ENCODE measurements at regions of chr5 and their contacts with region 1.

Region 1: DNA sequence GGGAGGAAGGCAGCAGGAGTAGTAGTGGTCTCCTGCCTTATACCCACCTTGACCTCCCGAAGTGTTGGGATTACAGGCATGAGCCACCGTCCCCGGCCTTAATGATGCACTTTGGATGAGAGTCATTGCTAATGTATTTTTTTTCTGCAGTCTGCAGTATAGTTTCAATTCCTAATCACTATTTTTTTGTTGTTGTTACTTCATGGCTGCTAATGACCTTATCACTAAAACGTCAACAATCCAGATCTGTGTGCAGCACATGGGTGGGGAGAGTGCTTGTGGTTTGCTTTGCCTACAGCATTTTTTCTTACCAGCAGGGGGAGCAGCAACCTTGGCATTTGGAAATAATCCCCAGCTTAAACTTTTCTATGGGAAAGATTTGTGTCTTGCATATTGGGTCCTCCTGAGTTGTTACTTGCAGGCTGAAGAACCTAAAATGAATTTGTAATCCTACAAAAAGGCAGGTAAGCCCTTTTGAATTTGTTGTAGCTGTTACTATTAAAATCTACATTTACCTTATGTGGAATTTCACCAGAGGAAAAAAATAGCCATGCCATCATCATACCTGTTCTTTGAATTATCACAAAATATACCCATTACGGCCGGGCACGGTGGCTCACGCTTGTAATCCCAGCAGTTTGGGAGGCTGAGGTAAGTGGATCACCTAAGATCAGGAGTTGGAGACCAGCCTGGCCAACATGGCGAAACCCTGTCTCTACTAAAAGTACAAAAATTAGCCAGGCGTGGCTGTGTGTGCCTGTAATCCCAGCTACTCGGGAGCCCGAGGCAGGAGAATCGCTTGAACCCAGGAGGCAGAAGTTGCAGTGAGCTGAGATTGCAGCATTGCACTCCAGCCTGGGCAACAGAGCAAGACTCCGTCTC is 6.3 kb upstream of the MED7 start:
- DNase-seq: peak; percentile 88
- ATAC-seq: peak; percentile 66
- H3K4me3 Mint-ChIP-seq: peak overlapping the region; percentile 2
- H3K27ac Mint-ChIP-seq: peak overlapping the region; percentile 74
- H3K4me1 Mint-ChIP-seq: peaks cover 48% of the 10 kb centered on the region
- H3K27me3 Mint-ChIP-seq: no peaks in the 10 kb centered on the region

Region 2: DNA sequence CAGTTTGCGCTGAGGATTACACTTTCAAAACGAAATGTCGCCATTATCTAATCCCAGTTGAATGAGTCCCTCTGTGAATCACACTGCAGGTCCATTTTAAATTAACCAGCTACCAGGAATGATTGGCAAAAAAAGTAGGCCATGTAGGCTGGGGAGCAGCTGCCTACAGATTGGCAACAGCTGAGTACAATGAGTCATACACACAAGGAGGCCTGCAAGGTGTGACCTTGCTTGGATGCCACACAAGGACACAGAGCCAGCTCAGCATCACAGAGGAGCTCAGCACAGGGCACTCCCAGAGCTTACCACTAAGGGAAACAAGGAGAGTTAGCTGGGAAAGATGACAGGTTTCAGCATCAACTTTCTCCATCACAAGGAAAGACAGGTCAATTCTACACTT is 102.9 kb before region 1 on chr5:
- CTCF ChIA-PET with region 1: no interaction called
- POLR2A ChIA-PET with region 1: no interaction called
- intact Hi-C with region 1: no loop called
- DNase-seq: peak; percentile 41
- ATAC-seq: peak; percentile 94
- H3K4me3 Mint-ChIP-seq: no peak overlapping the region
- H3K27ac Mint-ChIP-seq: no peak overlapping the region
- H3K4me1 Mint-ChIP-seq: peaks cover 39% of the 10 kb centered on the region
- H3K27me3 Mint-ChIP-seq: no peaks in the 10 kb centered on the region

Region 3: GRCh38 chr5:157172403-157172802 is 23.4 kb after region 1 on chr5:
- CTCF ChIA-PET with region 1: interaction called, 40 read pairs
- POLR2A ChIA-PET with region 1: interaction called, 6 read pairs
- intact Hi-C with region 1: no loop called
- DNase-seq: peak; percentile 96
- ATAC-seq: peak; percentile 93
- H3K4me3 Mint-ChIP-seq: peak overlapping the region; percentile 63
- H3K27ac Mint-ChIP-seq: peak overlapping the region; percentile 94
- H3K4me1 Mint-ChIP-seq: peaks cover 85% of the 10 kb centered on the region
- H3K27me3 Mint-ChIP-seq: no peaks in the 10 kb centered on the region

Region 4: GRCh38 chr5:157189223-157189622 is 40.2 kb after region 1 on chr5:
- CTCF ChIA-PET with region 1: interaction called, 28 read pairs
- POLR2A ChIA-PET with region 1: interaction called, 4 read pairs
- intact Hi-C with region 1: loop called in 1 of 2 experiments (anchors 2 kb)
- DNase-seq: peak; percentile 71
- ATAC-seq: peak; percentile 59
- H3K4me3 Mint-ChIP-seq: peak overlapping the region; percentile 93
- H3K27ac Mint-ChIP-seq: peak overlapping the region; percentile 96
- H3K4me1 Mint-ChIP-seq: peaks cover 75% of the 10 kb centered on the region
- H3K27me3 Mint-ChIP-seq: no peaks in the 10 kb centered on the region

Region 5: GRCh38 chr5:157204765-157205164 is 55.8 kb after region 1 on chr5:
- CTCF ChIA-PET with region 1: interaction called, 20 read pairs
- POLR2A ChIA-PET with region 1: interaction called, 3 read pairs
- intact Hi-C with region 1: no loop called
- DNase-seq: no peak
- ATAC-seq: no peak
- H3K4me3 Mint-ChIP-seq: peak overlapping the region; percentile 62
- H3K27ac Mint-ChIP-seq: peak overlapping the region; percentile 96
- H3K4me1 Mint-ChIP-seq: peaks cover 90% of the 10 kb centered on the region
- H3K27me3 Mint-ChIP-seq: no peaks in the 10 kb centered on the region

Region 6: DNA sequence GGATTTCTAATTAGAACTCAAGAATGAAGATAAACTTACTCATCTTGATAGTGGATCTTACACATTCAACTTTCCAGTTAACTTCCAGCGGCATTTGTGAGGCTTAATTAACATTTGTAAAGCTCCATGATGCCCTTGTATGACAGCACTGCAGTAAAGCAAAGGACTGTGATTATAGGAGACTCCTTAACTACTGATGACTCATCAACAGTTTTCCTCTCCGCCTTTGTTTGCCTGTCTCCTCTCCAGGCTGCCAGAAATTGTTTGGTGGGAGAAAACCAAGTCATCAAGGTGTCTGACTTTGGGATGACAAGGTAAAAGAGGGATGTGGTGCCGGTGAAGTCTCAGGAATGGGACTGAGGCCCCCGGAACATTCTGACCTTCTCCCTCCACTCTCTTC is 96.5 kb after region 1 on chr5:
- CTCF ChIA-PET with region 1: interaction called, 13 read pairs
- POLR2A ChIA-PET with region 1: no interaction called
- intact Hi-C with region 1: no loop called
- DNase-seq: no peak
- ATAC-seq: no peak
- H3K4me3 Mint-ChIP-seq: peak overlapping the region; percentile 12
- H3K27ac Mint-ChIP-seq: peak overlapping the region; percentile 88
- H3K4me1 Mint-ChIP-seq: peaks cover 89% of the 10 kb centered on the region
- H3K27me3 Mint-ChIP-seq: no peaks in the 10 kb centered on the region

Region 7: DNA sequence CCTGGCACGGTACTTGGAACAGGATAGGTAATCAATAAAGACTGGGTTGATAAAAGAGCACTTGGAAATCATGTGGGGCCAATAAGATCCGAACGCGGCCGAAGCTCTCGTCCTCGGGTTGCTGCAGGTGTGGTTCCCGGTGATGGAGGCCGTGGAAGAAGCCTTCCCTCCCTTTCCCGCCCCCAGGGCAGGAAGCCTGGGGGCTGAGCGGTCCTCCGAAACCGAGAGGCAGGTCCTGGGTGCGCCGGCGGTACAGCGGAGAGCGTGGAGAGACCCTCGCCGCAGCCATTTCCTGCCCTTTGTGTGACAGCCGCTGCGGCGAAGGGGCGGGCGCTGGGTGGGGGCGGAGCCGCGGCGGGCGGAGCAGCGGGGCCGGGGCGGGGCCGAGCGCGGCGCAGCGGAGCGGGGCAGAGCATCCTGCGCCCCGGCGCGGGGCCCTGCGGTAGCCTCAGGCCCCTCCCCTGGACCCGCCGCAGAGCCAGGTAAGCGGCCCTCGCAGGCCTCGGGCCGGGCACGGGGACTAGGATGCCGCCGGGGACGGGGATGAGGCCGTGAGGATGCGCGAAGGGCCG is 116.8 kb after region 1 on chr5 and contains the start of gene CYFIP2:
- CTCF ChIA-PET with region 1: interaction called, 6 read pairs
- POLR2A ChIA-PET with region 1: no interaction called
- intact Hi-C with region 1: loop called in 1 of 2 experiments (anchors 1 kb)
- DNase-seq: peak; percentile 91
- ATAC-seq: peak; percentile 78
- H3K4me3 Mint-ChIP-seq: peak within 1 kb of the TSS; percentile 96
- H3K27ac Mint-ChIP-seq: peak within 1 kb of the TSS; percentile 98
- H3K4me1 Mint-ChIP-seq: peaks cover 68% of the 10 kb centered on the region
- H3K27me3 Mint-ChIP-seq: no peaks in the 10 kb centered on the region
- total RNA-seq, gene CYFIP2: 277 to 526 TPM

Region 8: DNA sequence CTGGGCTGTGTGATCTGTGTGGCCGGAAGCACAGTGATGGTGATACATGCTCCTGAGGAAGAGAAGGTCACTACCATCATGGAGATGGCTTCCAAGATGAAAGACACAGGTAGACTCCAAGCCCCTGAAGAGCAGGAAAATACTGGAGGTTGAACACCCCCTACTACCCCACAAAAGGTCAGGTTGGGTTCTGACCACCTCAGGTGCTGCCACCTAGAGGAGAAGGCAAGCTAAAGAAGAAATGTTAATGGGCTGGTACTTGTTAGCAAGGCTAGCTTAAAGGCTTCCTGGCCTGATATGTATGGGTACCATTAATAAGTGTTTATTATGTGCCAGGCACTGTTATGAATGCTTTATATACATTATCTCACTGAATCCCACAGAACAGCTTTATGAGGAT is 322.7 kb after region 1 on chr5:
- CTCF ChIA-PET with region 1: no interaction called
- POLR2A ChIA-PET with region 1: no interaction called
- intact Hi-C with region 1: loop called (anchors 5 kb)
- DNase-seq: peak; percentile 49
- ATAC-seq: peak; percentile 58
- H3K4me3 Mint-ChIP-seq: no peak overlapping the region
- H3K27ac Mint-ChIP-seq: no peak overlapping the region
- H3K4me1 Mint-ChIP-seq: no peaks in the 10 kb centered on the region
- H3K27me3 Mint-ChIP-seq: no peaks in the 10 kb centered on the region